Activated naive CD8-positive, alpha-beta T cell treated with anti-CD3 and anti-CD28 coated beads, Interleukin-2, amount 10 ng/mL, durations not matched to agents 7 days and 5 days (primary cell): ENCODE measurements at regions of chr11 and their contacts with region 1.

Region 1: GRCh38 chr11:342328-342727 is 21.7 kb upstream of the IFITM3 start:
- DNase-seq: no peak
- ATAC-seq: no peak
- H3K4me3 Mint-ChIP-seq: no peak overlapping the region
- H3K27ac Mint-ChIP-seq: no peak overlapping the region
- H3K4me1 Mint-ChIP-seq: peaks cover 10% of the 10 kb centered on the region
- H3K27me3 Mint-ChIP-seq: peaks cover 3% of the 10 kb centered on the region

Region 2: GRCh38 chr11:196786-197719 is 145.3 kb before region 1 on chr11:
- POLR2A ChIA-PET with region 1: no interaction called
- DNase-seq: peak; percentile 30
- ATAC-seq: no peak
- H3K4me3 Mint-ChIP-seq: no peak overlapping the region
- H3K27ac Mint-ChIP-seq: no peak overlapping the region
- H3K4me1 Mint-ChIP-seq: peaks cover 9% of the 10 kb centered on the region
- H3K27me3 Mint-ChIP-seq: no peaks in the 10 kb centered on the region

Region 3: GRCh38 chr11:326842-327580 is 15.3 kb before region 1 on chr11:
- POLR2A ChIA-PET with region 1: interaction called, 14 read pairs
- DNase-seq: peak; percentile 77
- ATAC-seq: peak; percentile 62
- H3K4me3 Mint-ChIP-seq: peak overlapping the region; percentile 86
- H3K27ac Mint-ChIP-seq: peak overlapping the region; percentile 100
- H3K4me1 Mint-ChIP-seq: peaks cover 68% of the 10 kb centered on the region
- H3K27me3 Mint-ChIP-seq: no peaks in the 10 kb centered on the region